CD4-positive, alpha-beta T cell (primary cell): ENCODE measurements at regions of chr3 and their contacts with region 1.

Region 1: GRCh38 chr3:153161138-153161713 is 800 bp upstream of the RAP2B start:
- DNase-seq: peak; percentile 77 to 98 (median 85)
- ATAC-seq: peak; percentile 82
- H3K4me3 ChIP-seq: peak overlapping the region; percentile 94
- H3K4me3 Mint-ChIP-seq: peak overlapping the region; percentile 100
- H3K27ac ChIP-seq: peak overlapping the region; percentile 66 to 76
- H3K27ac Mint-ChIP-seq: peak overlapping the region; percentile 95
- H3K4me1 ChIP-seq: peaks cover 18% of the 10 kb centered on the region
- H3K4me1 Mint-ChIP-seq: peaks cover 50% of the 10 kb centered on the region
- H3K27me3 ChIP-seq: no peaks in the 10 kb centered on the region
- H3K27me3 Mint-ChIP-seq: no peaks in the 10 kb centered on the region
- CTCF ChIP-seq: no peak

Region 2: DNA sequence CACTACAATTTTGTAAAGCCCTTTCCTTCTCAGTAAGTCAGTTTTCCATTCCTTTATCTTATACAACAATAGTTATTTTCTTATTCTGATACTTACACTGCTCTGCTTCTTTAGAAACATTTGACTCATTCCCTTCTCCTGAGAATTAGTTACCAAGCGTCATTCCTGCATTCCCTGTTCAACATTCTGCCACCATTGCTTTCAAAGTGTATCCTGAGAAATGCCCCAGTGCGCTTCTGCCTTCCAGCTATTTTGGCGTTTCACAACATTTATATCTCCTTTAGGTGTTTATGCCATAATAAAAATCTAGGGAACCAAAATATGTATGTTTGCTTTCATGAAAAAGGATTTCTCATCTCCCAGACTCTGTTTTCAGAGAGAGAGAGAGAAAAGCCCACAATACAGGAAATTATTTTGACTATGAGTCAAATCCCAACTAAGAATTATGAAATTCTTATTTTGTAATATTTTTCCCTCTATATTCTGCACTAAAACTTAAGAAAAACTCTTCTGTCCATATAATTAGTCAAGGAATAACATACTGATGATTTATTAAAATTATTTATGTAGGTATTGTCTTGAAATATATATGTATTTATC is 117.4 kb before region 1 on chr3:
- CTCF ChIA-PET with region 1: interaction called, 6 read pairs
- POLR2A ChIA-PET with region 1: interaction called, 9 read pairs
- intact Hi-C with region 1: loop called (anchors 2 to 5 kb)
- DNase-seq: no peak
- ATAC-seq: no peak
- H3K4me3 ChIP-seq: no peak overlapping the region
- H3K4me3 Mint-ChIP-seq: no peak overlapping the region
- H3K27ac ChIP-seq: no peak overlapping the region
- H3K27ac Mint-ChIP-seq: no peak overlapping the region
- H3K4me1 ChIP-seq: no peaks in the 10 kb centered on the region
- H3K4me1 Mint-ChIP-seq: peaks cover 5% of the 10 kb centered on the region
- H3K27me3 ChIP-seq: no peaks in the 10 kb centered on the region
- H3K27me3 Mint-ChIP-seq: no peaks in the 10 kb centered on the region
- CTCF ChIP-seq: no peak

Region 3: GRCh38 chr3:153111016-153111415 is 50.2 kb before region 1 on chr3:
- CTCF ChIA-PET with region 1: no interaction called
- POLR2A ChIA-PET with region 1: no interaction called
- intact Hi-C with region 1: no loop called
- DNase-seq: no peak
- ATAC-seq: no peak
- H3K4me3 ChIP-seq: no peak overlapping the region
- H3K4me3 Mint-ChIP-seq: no peak overlapping the region
- H3K27ac ChIP-seq: no peak overlapping the region
- H3K27ac Mint-ChIP-seq: no peak overlapping the region
- H3K4me1 ChIP-seq: no peaks in the 10 kb centered on the region
- H3K4me1 Mint-ChIP-seq: no peaks in the 10 kb centered on the region
- H3K27me3 ChIP-seq: no peaks in the 10 kb centered on the region
- H3K27me3 Mint-ChIP-seq: peaks cover 4% of the 10 kb centered on the region
- CTCF ChIP-seq: no peak

Region 4: DNA sequence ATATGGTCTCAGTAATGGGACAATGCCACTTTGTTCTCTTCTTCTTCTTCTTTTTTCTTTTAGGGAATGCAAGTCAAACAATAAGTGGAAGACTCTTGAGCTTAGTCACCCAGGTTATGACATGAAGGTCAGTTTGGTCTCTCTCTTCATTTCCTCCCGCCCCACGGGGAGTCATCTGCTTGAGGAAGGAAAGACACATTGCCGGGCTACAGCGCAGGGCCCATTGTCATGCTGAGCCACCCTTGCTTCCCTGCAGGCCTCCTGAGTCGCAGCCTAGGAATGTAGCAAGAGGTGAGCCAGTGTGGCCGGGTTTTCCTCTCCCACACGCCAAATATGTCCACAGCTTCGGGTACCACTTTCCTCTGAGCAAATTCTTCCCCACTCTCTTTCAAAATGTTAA is 48.4 kb after region 1 on chr3:
- CTCF ChIA-PET with region 1: interaction called, 5 read pairs
- POLR2A ChIA-PET with region 1: interaction called, 10 read pairs
- intact Hi-C with region 1: loop called in 1 of 2 experiments (anchors 5 kb)
- DNase-seq: peak in 2 of 14 experiments; percentile 62 to 69
- ATAC-seq: no peak
- H3K4me3 ChIP-seq: peak overlapping the region; percentile 11
- H3K4me3 Mint-ChIP-seq: no peak overlapping the region
- H3K27ac ChIP-seq: no peak overlapping the region
- H3K27ac Mint-ChIP-seq: peak overlapping the region; percentile 26
- H3K4me1 ChIP-seq: peaks cover 15% of the 10 kb centered on the region
- H3K4me1 Mint-ChIP-seq: peaks cover 40% of the 10 kb centered on the region
- H3K27me3 ChIP-seq: no peaks in the 10 kb centered on the region
- H3K27me3 Mint-ChIP-seq: no peaks in the 10 kb centered on the region
- CTCF ChIP-seq: no peak

Region 5: GRCh38 chr3:153291056-153291685 is 129.9 kb after region 1 on chr3:
- CTCF ChIA-PET with region 1: interaction called, 21 read pairs
- POLR2A ChIA-PET with region 1: interaction called, 15 read pairs
- intact Hi-C with region 1: loop called (anchors 1 to 2 kb)
- DNase-seq: peak in 4 of 14 experiments; percentile 31 to 68 (median 56)
- ATAC-seq: no peak
- H3K4me3 ChIP-seq: no peak overlapping the region
- H3K4me3 Mint-ChIP-seq: no peak overlapping the region
- H3K27ac ChIP-seq: no peak overlapping the region
- H3K27ac Mint-ChIP-seq: no peak overlapping the region
- H3K4me1 ChIP-seq: peaks cover under 1% of the 10 kb centered on the region
- H3K4me1 Mint-ChIP-seq: peaks cover 46% of the 10 kb centered on the region
- H3K27me3 ChIP-seq: no peaks in the 10 kb centered on the region
- H3K27me3 Mint-ChIP-seq: no peaks in the 10 kb centered on the region
- CTCF ChIP-seq: peak; percentile 15

Region 6: DNA sequence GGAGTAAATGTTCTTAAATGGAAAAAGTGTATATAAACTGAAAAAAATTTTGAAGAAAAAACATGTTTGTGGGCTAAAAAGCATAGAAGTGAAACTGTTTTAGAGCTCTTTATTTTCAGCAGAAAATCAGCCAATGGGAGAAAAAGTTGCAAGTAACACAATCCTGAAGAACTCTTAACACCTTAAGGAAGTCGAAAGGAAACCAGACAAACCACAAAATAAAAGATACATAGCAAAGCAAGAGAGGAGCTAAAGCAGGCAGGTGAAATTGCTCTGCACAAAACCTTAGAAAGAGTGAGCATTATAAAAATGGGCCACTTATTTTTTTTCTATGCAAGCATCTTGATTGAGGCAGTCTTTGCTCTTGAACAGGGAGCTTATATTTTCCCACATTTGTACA is 301.3 kb after region 1 on chr3:
- CTCF ChIA-PET with region 1: no interaction called
- POLR2A ChIA-PET with region 1: interaction called, 12 read pairs
- intact Hi-C with region 1: loop called in 1 of 2 experiments (anchors 10 kb)
- DNase-seq: peak in 3 of 14 experiments; percentile 37 to 74 (median 40)
- ATAC-seq: peak; percentile 68
- H3K4me3 ChIP-seq: no peak overlapping the region
- H3K4me3 Mint-ChIP-seq: no peak overlapping the region
- H3K27ac ChIP-seq: no peak overlapping the region
- H3K27ac Mint-ChIP-seq: peak overlapping the region; percentile 5
- H3K4me1 ChIP-seq: peaks cover 4% of the 10 kb centered on the region
- H3K4me1 Mint-ChIP-seq: peaks cover 49% of the 10 kb centered on the region
- H3K27me3 ChIP-seq: no peaks in the 10 kb centered on the region
- H3K27me3 Mint-ChIP-seq: no peaks in the 10 kb centered on the region
- CTCF ChIP-seq: no peak

Region 7: GRCh38 chr3:153640689-153641301 is 479.6 kb after region 1 on chr3:
- CTCF ChIA-PET with region 1: no interaction called
- POLR2A ChIA-PET with region 1: interaction called, 11 read pairs
- intact Hi-C with region 1: no loop called
- DNase-seq: no peak
- ATAC-seq: no peak
- H3K4me3 ChIP-seq: no peak overlapping the region
- H3K4me3 Mint-ChIP-seq: no peak overlapping the region
- H3K27ac ChIP-seq: no peak overlapping the region
- H3K27ac Mint-ChIP-seq: no peak overlapping the region
- H3K4me1 ChIP-seq: peaks cover 13% of the 10 kb centered on the region
- H3K4me1 Mint-ChIP-seq: peaks cover 39% of the 10 kb centered on the region
- H3K27me3 ChIP-seq: no peaks in the 10 kb centered on the region
- H3K27me3 Mint-ChIP-seq: no peaks in the 10 kb centered on the region
- CTCF ChIP-seq: no peak